Mammary epithelial cell (primary cell): ENCODE measurements at regions of chr20 and their contacts with region 1.

Region 1: GRCh38 chr20:32988008-32988407 is 16.2 kb downstream of the SUN5 start:
- DNase-seq: no peak
- H3K4me3 ChIP-seq: no peak overlapping the region
- H3K27ac ChIP-seq: no peak overlapping the region
- H3K4me1 ChIP-seq: no peaks in the 10 kb centered on the region
- H3K27me3 ChIP-seq: no peaks in the 10 kb centered on the region
- CTCF ChIP-seq: no peak

Region 2: GRCh38 chr20:32845786-32846185 is 142.2 kb before region 1 on chr20:
- CTCF ChIA-PET with region 1: no interaction called
- dilution Hi-C with region 1: no loop called
- in situ Hi-C with region 1: no loop called
- intact Hi-C with region 1: no loop called
- DNase-seq: peak; percentile 9
- H3K4me3 ChIP-seq: no peak overlapping the region
- H3K27ac ChIP-seq: no peak overlapping the region
- H3K4me1 ChIP-seq: peaks cover 4% of the 10 kb centered on the region
- H3K27me3 ChIP-seq: no peaks in the 10 kb centered on the region
- CTCF ChIP-seq: no peak

Region 3: GRCh38 chr20:32941155-32941885 is 46.7 kb before region 1 on chr20:
- CTCF ChIA-PET with region 1: no interaction called
- dilution Hi-C with region 1: no loop called
- in situ Hi-C with region 1: no loop called
- intact Hi-C with region 1: no loop called
- DNase-seq: no peak
- H3K4me3 ChIP-seq: no peak overlapping the region
- H3K27ac ChIP-seq: no peak overlapping the region
- H3K4me1 ChIP-seq: no peaks in the 10 kb centered on the region
- H3K27me3 ChIP-seq: no peaks in the 10 kb centered on the region
- CTCF ChIP-seq: no peak

Region 4: DNA sequence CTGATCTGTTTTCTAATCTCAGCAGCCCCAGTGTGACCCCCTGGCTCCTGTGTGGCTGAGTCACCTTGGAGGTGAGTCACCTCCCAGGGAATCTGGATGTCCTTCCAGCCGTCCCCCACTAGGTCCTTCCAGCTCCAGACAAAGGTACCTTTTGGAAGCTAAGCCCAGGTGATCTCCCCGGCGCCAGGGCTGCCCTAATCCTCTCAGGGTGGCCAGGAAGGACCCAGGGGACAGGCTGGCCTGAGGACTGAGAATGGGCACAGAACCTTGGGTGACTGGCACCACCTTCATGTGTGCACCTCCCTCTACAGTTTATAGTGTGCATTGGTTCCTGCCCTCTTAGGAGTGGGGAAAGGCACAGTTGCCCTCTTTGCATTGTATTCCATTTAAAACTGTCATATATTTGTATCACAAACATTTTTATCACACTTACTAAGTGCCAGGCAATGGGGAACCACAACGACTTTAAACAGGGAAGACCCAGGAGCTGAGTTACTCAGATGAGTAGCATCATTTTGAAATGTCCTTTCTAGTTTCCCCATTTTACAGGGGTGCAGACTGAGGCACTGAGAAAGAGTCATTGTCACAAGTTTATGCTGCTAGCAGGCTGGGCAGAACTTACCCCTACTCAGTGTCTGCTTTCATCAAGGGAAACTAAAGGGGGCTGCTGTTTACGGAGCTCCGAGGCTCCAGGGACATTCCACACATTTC is 88.8 kb after region 1 on chr20:
- CTCF ChIA-PET with region 1: no interaction called
- dilution Hi-C with region 1: loop called (anchors 5 kb)
- in situ Hi-C with region 1: no loop called
- intact Hi-C with region 1: no loop called
- DNase-seq: peak; percentile 17
- H3K4me3 ChIP-seq: no peak overlapping the region
- H3K27ac ChIP-seq: no peak overlapping the region
- H3K4me1 ChIP-seq: no peaks in the 10 kb centered on the region
- H3K27me3 ChIP-seq: no peaks in the 10 kb centered on the region
- CTCF ChIP-seq: peak; percentile 23 to 46

Region 5: DNA sequence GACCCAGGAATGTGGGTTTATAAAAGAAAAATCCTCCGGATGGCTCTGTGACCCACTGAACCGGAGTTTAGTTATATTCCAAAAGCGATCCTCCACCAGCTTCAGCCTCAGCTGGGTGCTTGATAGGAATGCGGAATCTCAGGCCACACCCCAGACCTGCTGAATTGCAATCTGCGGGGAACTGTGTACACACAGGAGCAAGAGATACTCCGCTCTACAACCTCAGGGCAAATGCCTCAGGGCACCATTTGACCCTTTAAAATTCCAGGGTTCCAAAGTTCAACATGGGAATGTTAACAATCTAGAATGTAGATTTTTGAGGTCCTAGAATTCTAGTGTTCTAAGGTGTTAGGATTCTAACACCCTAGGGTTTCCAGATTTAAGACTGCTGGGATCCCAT is 190.7 kb after region 1 on chr20:
- CTCF ChIA-PET with region 1: no interaction called
- dilution Hi-C with region 1: no loop called
- in situ Hi-C with region 1: no loop called
- intact Hi-C with region 1: no loop called
- DNase-seq: no peak
- H3K4me3 ChIP-seq: no peak overlapping the region
- H3K27ac ChIP-seq: no peak overlapping the region
- H3K4me1 ChIP-seq: no peaks in the 10 kb centered on the region
- H3K27me3 ChIP-seq: no peaks in the 10 kb centered on the region
- CTCF ChIP-seq: no peak